ENCODE measurements at regions of chr10 and their contacts with region 1.

Region 1: GRCh38 chr10:11757821-11758463 is 15.8 kb downstream of the ECHDC3 start:
- DNase-seq: peak; percentile 91
- H3K4me3 ChIP-seq: no peak overlapping the region
- H3K27ac ChIP-seq: peak overlapping the region; percentile 62
- H3K4me1 ChIP-seq: peaks cover 21% of the 10 kb centered on the region
- H3K27me3 ChIP-seq: no peaks in the 10 kb centered on the region
- CTCF ChIP-seq: peak; percentile 97 to 99

Region 2: GRCh38 chr10:11533328-11533781 is 224.6 kb before region 1 on chr10:
- CTCF ChIA-PET with region 1: interaction called, 6 read pairs
- dilution Hi-C with region 1: no loop called
- in situ Hi-C with region 1: no loop called
- intact Hi-C with region 1: loop called (anchors 5 kb)
- DNase-seq: peak; percentile 38
- H3K4me3 ChIP-seq: no peak overlapping the region
- H3K27ac ChIP-seq: peak overlapping the region; percentile 56
- H3K4me1 ChIP-seq: peaks cover 21% of the 10 kb centered on the region
- H3K27me3 ChIP-seq: no peaks in the 10 kb centered on the region
- CTCF ChIP-seq: peak; percentile 45 to 55

Region 3: GRCh38 chr10:11715815-11716494 is 42.0 kb before region 1 on chr10:
- CTCF ChIA-PET with region 1: no interaction called
- dilution Hi-C with region 1: loop called (anchors 5 kb)
- in situ Hi-C with region 1: no loop called
- intact Hi-C with region 1: no loop called
- DNase-seq: peak; percentile 22
- H3K4me3 ChIP-seq: no peak overlapping the region
- H3K27ac ChIP-seq: no peak overlapping the region
- H3K4me1 ChIP-seq: no peaks in the 10 kb centered on the region
- H3K27me3 ChIP-seq: no peaks in the 10 kb centered on the region
- CTCF ChIP-seq: no peak

Region 4: DNA sequence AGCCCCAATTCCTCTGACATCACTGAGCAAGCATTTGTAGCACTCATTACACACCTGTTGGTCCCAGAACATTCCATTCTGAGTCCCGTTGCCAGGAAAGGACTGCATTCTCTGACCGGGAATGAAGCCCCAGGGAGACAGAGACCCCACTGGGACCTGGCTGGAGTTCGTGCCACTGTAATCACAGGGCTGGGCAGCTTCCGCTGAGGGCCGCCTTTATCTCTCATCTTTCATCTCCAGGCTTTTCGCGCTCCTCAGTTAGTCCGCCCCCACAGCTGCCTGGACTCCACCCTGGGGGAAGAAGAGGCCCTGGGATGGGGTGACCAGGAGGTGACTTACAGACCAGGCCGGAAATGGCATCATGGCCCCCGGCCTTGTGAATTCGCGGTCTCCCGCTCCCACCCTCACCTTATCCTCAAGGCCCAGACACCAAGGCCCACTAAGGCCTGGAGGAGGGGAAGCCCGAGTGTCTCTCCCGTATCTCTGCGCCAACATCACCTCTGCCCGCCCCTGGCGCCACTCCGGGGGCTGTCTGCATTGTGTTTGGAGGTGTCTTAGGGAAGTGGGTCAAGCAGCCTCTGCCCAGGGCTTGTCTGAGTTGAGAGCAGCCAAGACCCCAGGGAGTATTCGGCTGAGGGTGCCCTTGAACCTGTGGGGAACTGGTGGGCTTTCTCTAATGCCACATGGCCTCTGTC is 140.6 kb after region 1 on chr10:
- CTCF ChIA-PET with region 1: no interaction called
- dilution Hi-C with region 1: no loop called
- in situ Hi-C with region 1: no loop called
- intact Hi-C with region 1: no loop called
- DNase-seq: peak; percentile 85
- H3K4me3 ChIP-seq: no peak overlapping the region
- H3K27ac ChIP-seq: peak overlapping the region; percentile 83
- H3K4me1 ChIP-seq: peaks cover 24% of the 10 kb centered on the region
- H3K27me3 ChIP-seq: no peaks in the 10 kb centered on the region
- CTCF ChIP-seq: no peak